ENCODE measurements at regions of chr7 and their contacts with region 1.

Region 1: GRCh38 chr7:38398725-38399321 is 125.4 kb upstream of the TARP start:
- DNase-seq: peak; percentile 33
- H3K4me3 ChIP-seq: no peak overlapping the region
- H3K27ac ChIP-seq: no peak overlapping the region
- H3K4me1 ChIP-seq: no peaks in the 10 kb centered on the region
- H3K27me3 ChIP-seq: no peaks in the 10 kb centered on the region
- CTCF ChIP-seq: peak; percentile 88

Region 2: DNA sequence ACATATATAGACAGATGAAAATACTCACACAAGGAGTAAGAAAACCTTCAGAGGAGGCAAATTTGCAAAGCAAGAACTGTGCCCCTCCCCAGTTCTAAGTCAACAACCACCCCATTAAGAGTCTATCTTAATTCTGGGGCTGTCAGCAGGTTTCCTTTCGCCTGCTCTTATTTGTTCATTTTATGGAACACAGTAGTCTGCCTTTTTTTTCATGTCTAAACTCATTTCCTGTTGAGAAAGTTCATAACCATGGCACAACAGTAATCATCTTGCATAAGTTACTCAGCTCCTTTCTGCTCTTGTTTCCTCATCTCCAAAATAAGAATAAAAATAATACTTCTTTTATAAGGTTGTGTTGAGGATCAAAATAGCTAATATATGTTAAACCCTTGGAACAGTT is 258.1 kb after region 1 on chr7:
- intact Hi-C with region 1: loop called (anchors 5 kb)
- DNase-seq: no peak
- H3K4me3 ChIP-seq: no peak overlapping the region
- H3K27ac ChIP-seq: no peak overlapping the region
- H3K4me1 ChIP-seq: no peaks in the 10 kb centered on the region
- H3K27me3 ChIP-seq: no peaks in the 10 kb centered on the region
- CTCF ChIP-seq: no peak

Region 3: DNA sequence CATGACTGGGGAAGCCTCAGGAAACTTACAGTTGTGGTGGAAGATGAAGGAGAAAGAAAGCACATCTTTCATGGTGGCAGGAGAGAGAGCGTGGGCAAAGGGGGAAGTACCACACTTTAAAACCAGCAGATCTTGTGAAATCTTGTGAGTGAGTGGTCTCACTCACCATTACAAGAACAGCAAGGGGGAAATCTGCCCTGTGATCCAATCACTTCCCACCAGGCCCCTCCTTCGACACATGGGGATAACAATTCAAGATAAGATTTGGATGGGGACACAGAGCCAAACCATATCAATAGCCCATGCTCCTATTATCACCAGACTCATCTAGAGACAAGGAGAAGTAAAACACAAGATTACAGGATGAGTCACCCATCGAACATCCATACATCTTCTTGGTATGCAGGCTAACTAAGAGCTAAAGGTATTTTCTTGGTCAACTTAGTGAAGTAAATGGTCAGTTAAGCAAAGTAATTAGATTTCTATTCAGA is 1112.1 kb after region 1 on chr7:
- intact Hi-C with region 1: loop called (anchors 10 kb)
- DNase-seq: no peak
- H3K4me3 ChIP-seq: no peak overlapping the region
- H3K27ac ChIP-seq: no peak overlapping the region
- H3K4me1 ChIP-seq: no peaks in the 10 kb centered on the region
- H3K27me3 ChIP-seq: no peaks in the 10 kb centered on the region
- CTCF ChIP-seq: no peak

Measured in colonic mucosa (tissue), 4 donors.